HepG2 (cell line): ENCODE measurements at regions of chr9 and their contacts with region 1.

Region 1: GRCh38 chr9:119289740-119290433 is 79.3 kb downstream of the BRINP1 start:
- DNase-seq: peak; percentile 32
- ATAC-seq: peak; percentile 40; the same call in 1 of the 3 replicates
- H3K4me3 ChIP-seq: no peak overlapping the region
- H3K27ac ChIP-seq: no peak overlapping the region
- H3K4me1 ChIP-seq: no peaks in the 10 kb centered on the region
- H3K27me3 ChIP-seq: no peaks in the 10 kb centered on the region
- CTCF ChIP-seq: peak; percentile 34; the same call in 1 of the 2 replicates
- EP300 ChIP-seq: no peak
- POLR2A ChIP-seq: no peak
- RAD21 ChIP-seq: no peak

Region 2: DNA sequence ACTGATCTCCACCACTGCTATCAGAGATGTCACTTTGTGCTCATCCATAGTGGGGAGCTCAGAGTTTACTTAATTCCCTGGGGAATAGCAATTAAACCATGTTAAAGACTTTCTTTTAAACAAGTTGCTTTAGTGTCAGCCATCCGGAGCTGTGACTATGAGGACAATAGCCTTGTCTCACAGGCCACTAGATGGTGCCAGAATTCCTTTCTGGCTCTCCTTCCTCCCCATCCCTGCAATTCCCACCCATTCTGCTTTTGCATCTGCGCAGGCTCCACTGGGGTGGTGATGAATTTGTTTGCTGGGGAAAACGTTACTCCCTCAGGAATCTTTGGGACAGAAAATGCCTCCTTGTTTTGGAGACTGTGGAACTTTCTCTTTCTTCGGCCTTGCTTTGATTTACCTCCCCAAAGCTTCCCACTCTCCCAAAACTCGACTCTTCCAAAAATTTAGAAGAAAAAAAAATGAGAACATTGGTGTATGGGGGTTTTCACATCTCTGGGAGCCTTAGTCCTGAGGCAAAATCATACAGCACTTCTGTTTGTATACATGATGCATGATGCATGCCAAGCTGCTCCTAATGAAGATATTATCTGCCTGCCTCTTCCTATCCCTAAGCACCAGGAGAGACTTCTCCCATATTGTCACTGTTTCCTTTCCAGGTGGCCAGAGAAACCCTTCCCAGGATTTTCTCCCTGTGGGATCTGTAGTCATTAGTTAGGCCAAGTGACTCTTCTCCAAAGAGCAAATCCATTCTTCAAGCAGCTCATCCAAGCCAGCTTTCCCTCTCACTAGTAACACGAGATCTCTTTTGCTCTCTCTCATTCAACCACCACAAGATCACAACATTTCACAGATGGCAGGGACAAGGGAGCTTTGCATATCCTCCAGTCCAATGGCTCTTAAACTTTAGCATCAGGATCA is 1119.6 kb before region 1 on chr9:
- CTCF ChIA-PET with region 1: no interaction called
- POLR2A ChIA-PET with region 1: no interaction called
- in situ Hi-C with region 1: no loop called
- intact Hi-C with region 1: loop called (anchors 5 kb)
- DNase-seq: peak; percentile 7
- ATAC-seq: peak; percentile 62
- H3K4me3 ChIP-seq: no peak overlapping the region
- H3K27ac ChIP-seq: no peak overlapping the region
- H3K4me1 ChIP-seq: no peaks in the 10 kb centered on the region
- H3K27me3 ChIP-seq: no peaks in the 10 kb centered on the region
- CTCF ChIP-seq: peak; percentile 51
- EP300 ChIP-seq: no peak
- POLR2A ChIP-seq: no peak
- RAD21 ChIP-seq: no peak

Region 3: GRCh38 chr9:118522093-118523028 is 767.5 kb before region 1 on chr9:
- CTCF ChIA-PET with region 1: interaction called, 3 read pairs
- POLR2A ChIA-PET with region 1: no interaction called
- in situ Hi-C with region 1: no loop called
- intact Hi-C with region 1: loop called (anchors 5 kb)
- DNase-seq: peak; percentile 8
- ATAC-seq: peak; percentile 35; the same call in 1 of the 3 replicates
- H3K4me3 ChIP-seq: no peak overlapping the region
- H3K27ac ChIP-seq: no peak overlapping the region
- H3K4me1 ChIP-seq: no peaks in the 10 kb centered on the region
- H3K27me3 ChIP-seq: no peaks in the 10 kb centered on the region
- CTCF ChIP-seq: peak; percentile 32
- EP300 ChIP-seq: no peak
- POLR2A ChIP-seq: no peak
- RAD21 ChIP-seq: no peak

Region 4: GRCh38 chr9:119398350-119398749 is 108.5 kb after region 1 on chr9:
- CTCF ChIA-PET with region 1: no interaction called
- POLR2A ChIA-PET with region 1: no interaction called
- in situ Hi-C with region 1: no loop called
- intact Hi-C with region 1: no loop called
- DNase-seq: no peak
- ATAC-seq: no peak
- H3K4me3 ChIP-seq: no peak overlapping the region
- H3K27ac ChIP-seq: no peak overlapping the region
- H3K4me1 ChIP-seq: no peaks in the 10 kb centered on the region
- H3K27me3 ChIP-seq: no peaks in the 10 kb centered on the region
- CTCF ChIP-seq: no peak
- EP300 ChIP-seq: no peak
- POLR2A ChIP-seq: no peak
- RAD21 ChIP-seq: no peak